MCF 10A (cell line): ENCODE measurements at regions of chr12 and their contacts with region 1.

Region 1: GRCh38 chr12:108664338-108665258 is 30.9 kb upstream of the SELPLG start:
- DNase-seq: peak; percentile 96
- H3K4me3 Mint-ChIP-seq: peak overlapping the region; percentile 47
- H3K27ac Mint-ChIP-seq: peak overlapping the region; percentile 92
- H3K4me1 Mint-ChIP-seq: peaks cover 34% of the 10 kb centered on the region
- H3K27me3 Mint-ChIP-seq: no peaks in the 10 kb centered on the region
- CTCF ChIP-seq: peak; percentile 83

Region 2: DNA sequence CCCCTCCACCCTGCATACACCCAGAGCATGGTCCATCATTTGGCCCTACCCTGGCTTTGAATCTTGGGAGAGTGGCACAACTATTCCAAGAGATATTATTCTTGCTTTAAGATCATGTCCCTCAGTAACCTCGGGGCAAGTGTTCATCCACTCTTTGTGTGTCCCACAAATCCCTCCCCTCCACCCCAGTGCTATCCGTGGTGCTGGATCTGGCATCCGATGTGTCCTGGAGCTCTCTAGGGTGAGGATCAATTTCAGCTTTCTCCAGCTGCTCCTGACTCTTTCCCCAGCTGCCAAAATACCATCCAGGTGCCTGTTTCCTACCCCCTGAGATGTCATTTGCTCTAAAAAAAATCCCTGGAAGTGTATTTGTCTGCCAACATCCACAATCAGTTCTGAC is 260.6 kb before region 1 on chr12:
- CTCF ChIA-PET with region 1: no interaction called
- POLR2A ChIA-PET with region 1: no interaction called
- intact Hi-C with region 1: no loop called
- DNase-seq: peak; percentile 22
- H3K4me3 Mint-ChIP-seq: no peak overlapping the region
- H3K27ac Mint-ChIP-seq: no peak overlapping the region
- H3K4me1 Mint-ChIP-seq: no peaks in the 10 kb centered on the region
- H3K27me3 Mint-ChIP-seq: peaks cover 21% of the 10 kb centered on the region
- CTCF ChIP-seq: no peak

Region 3: DNA sequence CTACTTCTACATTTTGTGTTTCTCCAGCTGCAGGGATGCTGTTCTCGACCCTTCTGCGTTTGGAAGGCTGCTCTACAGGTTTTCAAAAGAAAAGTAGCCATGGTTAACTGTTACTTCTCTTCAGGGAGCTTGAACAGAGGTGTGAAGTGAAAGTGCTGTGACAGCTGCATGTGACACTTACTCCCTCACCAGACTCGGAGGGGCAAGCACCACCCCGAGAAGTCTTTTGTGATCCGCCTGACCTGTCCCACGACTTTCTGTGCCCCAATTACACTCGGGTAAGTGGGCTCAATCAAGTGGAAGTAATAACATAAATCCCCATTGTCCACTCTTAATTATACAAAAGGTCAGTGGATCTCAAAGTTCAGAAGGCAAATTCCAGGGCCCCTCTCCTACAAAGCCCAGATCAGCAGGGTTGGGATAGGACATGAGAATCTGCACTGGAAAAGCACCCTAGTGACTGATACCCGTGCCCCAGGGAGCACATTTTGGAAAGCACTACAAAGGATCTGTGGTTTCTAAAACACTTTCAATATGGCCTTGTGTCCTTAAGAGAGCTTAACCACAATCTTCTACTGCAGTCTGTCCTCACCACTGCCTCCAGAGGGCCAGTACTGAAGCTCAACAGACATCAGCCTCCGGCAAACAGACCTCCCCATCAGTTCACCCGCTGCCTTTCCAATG is 138.0 kb before region 1 on chr12:
- CTCF ChIA-PET with region 1: no interaction called
- POLR2A ChIA-PET with region 1: no interaction called
- intact Hi-C with region 1: no loop called
- DNase-seq: no peak
- H3K4me3 Mint-ChIP-seq: no peak overlapping the region
- H3K27ac Mint-ChIP-seq: peak overlapping the region; percentile 32
- H3K4me1 Mint-ChIP-seq: no peaks in the 10 kb centered on the region
- H3K27me3 Mint-ChIP-seq: no peaks in the 10 kb centered on the region
- CTCF ChIP-seq: no peak

Region 4: DNA sequence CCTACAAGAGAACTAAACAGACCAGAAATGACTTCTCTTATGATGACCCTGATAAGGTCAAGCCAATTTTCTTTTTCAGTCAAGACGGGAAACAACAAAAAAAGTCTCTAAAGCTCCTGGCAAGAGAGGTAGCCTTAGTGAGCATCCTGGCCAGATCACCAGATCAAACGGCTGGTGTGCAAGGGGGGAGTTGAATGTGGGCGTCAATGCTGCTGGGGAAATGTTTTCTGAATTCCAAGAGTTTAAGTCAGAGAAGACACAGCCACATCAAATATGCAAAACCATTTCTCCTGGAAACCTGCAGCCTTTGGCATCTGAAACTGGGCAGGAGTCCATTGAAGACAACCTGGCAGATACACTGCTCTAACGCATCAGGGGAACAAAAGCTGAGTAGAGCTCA is 14.9 kb before region 1 on chr12:
- CTCF ChIA-PET with region 1: interaction called, 24 read pairs
- POLR2A ChIA-PET with region 1: interaction called, 3 read pairs
- intact Hi-C with region 1: no loop called
- DNase-seq: peak; percentile 41
- H3K4me3 Mint-ChIP-seq: no peak overlapping the region
- H3K27ac Mint-ChIP-seq: no peak overlapping the region
- H3K4me1 Mint-ChIP-seq: no peaks in the 10 kb centered on the region
- H3K27me3 Mint-ChIP-seq: no peaks in the 10 kb centered on the region
- CTCF ChIP-seq: no peak

Region 5: GRCh38 chr12:108691175-108691997 is 26.8 kb after region 1 on chr12:
- CTCF ChIA-PET with region 1: interaction called, 73 read pairs
- POLR2A ChIA-PET with region 1: interaction called, 65 read pairs
- intact Hi-C with region 1: loop called (anchors 2 kb)
- DNase-seq: peak; percentile 100
- H3K4me3 Mint-ChIP-seq: peak overlapping the region; percentile 71
- H3K27ac Mint-ChIP-seq: peak overlapping the region; percentile 98
- H3K4me1 Mint-ChIP-seq: peaks cover 46% of the 10 kb centered on the region
- H3K27me3 Mint-ChIP-seq: no peaks in the 10 kb centered on the region
- CTCF ChIP-seq: peak; percentile 22

Region 6: GRCh38 chr12:108803428-108804105 is 139.0 kb after region 1 on chr12:
- CTCF ChIA-PET with region 1: interaction called, 296 read pairs
- POLR2A ChIA-PET with region 1: interaction called, 29 read pairs
- intact Hi-C with region 1: loop called (anchors 1 kb)
- DNase-seq: peak; percentile 88
- H3K4me3 Mint-ChIP-seq: no peak overlapping the region
- H3K27ac Mint-ChIP-seq: no peak overlapping the region
- H3K4me1 Mint-ChIP-seq: no peaks in the 10 kb centered on the region
- H3K27me3 Mint-ChIP-seq: no peaks in the 10 kb centered on the region
- CTCF ChIP-seq: peak; percentile 96

Region 7: GRCh38 chr12:108856428-108857157 is 192.0 kb after region 1 on chr12:
- CTCF ChIA-PET with region 1: interaction called, 6 read pairs
- POLR2A ChIA-PET with region 1: no interaction called
- intact Hi-C with region 1: loop called (anchors 1 kb)
- DNase-seq: peak; percentile 69
- H3K4me3 Mint-ChIP-seq: peak overlapping the region; percentile 91
- H3K27ac Mint-ChIP-seq: peak overlapping the region; percentile 92
- H3K4me1 Mint-ChIP-seq: peaks cover 33% of the 10 kb centered on the region
- H3K27me3 Mint-ChIP-seq: no peaks in the 10 kb centered on the region
- CTCF ChIP-seq: no peak

Region 8: DNA sequence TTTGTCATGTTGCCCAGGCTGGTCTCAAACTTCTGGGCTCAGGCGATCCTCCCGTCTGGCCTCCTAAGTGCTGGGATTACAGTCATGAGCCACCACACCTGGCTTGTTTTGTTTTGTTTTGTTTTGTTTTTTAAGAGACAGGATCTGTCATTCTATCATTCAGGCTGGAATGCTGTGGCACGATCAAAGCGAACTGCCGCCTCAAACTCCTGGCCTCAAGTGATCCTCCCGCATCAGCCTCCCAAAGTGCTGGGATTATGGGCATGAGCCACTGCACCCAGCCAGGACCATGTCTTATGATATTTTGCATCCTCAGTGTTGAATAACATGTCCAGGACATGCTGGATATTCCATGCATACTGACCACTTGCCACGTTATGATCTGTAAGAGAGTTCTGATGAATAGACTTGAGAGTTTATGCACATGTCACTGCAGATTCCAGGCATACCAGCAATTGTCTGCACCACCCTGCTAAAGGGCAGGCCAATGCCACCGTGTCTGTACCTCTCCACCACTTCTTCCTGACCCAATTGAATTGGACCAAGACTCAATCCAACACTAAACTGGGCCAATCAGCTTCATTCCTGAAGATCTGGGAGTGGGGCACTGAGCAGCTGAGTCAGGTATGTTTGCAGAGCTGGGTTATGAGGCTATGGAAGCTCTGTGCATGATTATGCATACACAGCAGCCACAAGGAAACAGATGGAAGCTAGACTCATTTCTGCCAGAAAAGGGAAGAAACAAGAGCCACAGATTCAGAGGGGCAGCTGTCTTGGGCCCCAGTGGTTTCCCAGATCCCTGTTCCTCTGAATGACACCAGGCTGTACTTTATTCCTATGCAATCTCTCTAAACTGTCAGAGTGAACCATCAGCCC is 243.1 kb after region 1 on chr12:
- CTCF ChIA-PET with region 1: no interaction called
- POLR2A ChIA-PET with region 1: no interaction called
- intact Hi-C with region 1: no loop called
- DNase-seq: no peak
- H3K4me3 Mint-ChIP-seq: no peak overlapping the region
- H3K27ac Mint-ChIP-seq: no peak overlapping the region
- H3K4me1 Mint-ChIP-seq: no peaks in the 10 kb centered on the region
- H3K27me3 Mint-ChIP-seq: no peaks in the 10 kb centered on the region
- CTCF ChIP-seq: no peak